GM13976 (cell line): ENCODE measurements at regions of chr12 and their contacts with region 1.

Region 1: GRCh38 chr12:71746983-71747611 is 7.6 kb upstream of the RAB21 start:
- DNase-seq: peak; percentile 35
- CTCF ChIP-seq: peak; percentile 69

Region 2: GRCh38 chr12:71415336-71416231 is 331.5 kb before region 1 on chr12:
- in situ Hi-C with region 1: loop called (anchors 10 kb)
- DNase-seq: peak; percentile 58
- CTCF ChIP-seq: peak; percentile 70

Region 3: DNA sequence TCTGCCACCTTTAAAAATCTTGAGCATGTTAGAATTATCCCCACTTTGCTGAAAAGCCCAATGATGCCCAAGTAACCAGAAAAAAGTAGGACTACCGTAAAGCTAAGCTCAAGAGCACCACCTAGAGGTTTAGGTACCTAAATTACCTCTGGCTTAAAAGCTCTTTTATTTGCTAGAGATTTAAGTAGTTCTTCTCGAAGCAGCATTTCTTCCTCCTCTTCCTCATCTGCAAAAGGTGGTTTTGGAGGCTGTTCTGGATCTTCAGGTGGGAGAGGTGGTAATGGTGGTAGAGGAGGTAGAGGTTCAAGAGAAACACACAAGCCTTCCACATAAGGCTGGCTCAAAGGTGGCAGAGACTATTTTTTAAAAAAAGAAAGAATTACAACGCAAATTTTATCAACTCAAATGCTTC is 110.4 kb before region 1 on chr12:
- in situ Hi-C with region 1: loop called (anchors 10 kb)
- DNase-seq: peak; percentile 47
- CTCF ChIP-seq: peak; percentile 68